ENCODE measurements at regions of chr4 and their contacts with region 1.

Region 1: DNA sequence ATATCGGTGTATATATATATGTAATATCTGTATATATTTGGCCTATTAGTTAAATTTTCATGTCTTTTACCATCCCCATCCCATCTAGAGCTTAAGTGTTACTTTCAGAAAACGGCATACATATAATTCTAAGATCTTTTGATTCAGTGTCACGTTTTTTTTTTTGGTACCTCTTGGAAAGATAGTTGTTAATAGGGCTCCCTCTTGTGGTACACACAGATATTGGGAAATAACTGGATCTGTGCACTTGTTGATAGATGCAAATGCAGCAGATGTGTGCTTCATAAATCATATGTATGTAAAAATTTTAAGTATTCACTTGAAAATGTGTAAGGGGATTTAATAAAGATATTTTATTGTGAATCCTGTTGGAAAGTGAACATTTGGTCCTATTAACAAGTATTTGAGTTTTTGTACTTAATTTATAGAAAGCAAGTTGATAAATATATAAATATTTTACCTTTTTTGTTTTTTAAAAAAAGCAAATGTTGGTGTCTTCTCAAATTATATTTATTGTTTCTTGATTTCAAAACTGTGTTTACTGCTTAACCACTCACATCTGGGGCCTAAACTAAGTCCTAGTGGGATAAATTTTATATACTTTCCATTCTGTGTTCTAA is 74.7 kb downstream of the PAQR3 start:
- DNase-seq: no peak
- ATAC-seq: peak; percentile 81
- H3K4me3 ChIP-seq: no peak overlapping the region
- H3K27ac ChIP-seq: no peak overlapping the region
- H3K4me1 ChIP-seq: no peaks in the 10 kb centered on the region
- H3K27me3 ChIP-seq: no peaks in the 10 kb centered on the region

Region 2: DNA sequence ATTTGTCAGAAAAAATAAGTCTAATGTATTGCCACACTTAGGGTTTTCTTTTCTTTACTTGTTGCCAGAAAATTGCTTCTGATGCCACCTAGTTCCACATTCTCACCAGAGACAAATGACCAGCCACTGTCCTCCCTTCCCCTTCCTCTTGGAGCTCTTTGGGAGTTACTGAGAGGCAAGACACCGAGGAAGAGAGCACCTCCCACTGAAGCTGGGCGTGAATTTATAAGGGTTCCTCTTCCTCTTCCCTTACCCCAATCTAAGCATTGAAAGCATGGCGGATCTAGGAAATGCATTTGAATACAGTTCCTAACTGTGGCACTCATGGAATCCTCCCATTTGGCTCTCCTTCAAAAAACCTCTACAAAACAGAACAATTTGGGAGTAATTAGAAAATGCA is 282.9 kb before region 1 on chr4:
- intact Hi-C with region 1: no loop called
- DNase-seq: peak in 1 of 2 donors; percentile 64
- ATAC-seq: no peak
- H3K4me3 ChIP-seq: no peak overlapping the region
- H3K27ac ChIP-seq: no peak overlapping the region
- H3K4me1 ChIP-seq: no peaks in the 10 kb centered on the region
- H3K27me3 ChIP-seq: no peaks in the 10 kb centered on the region

Region 3: GRCh38 chr4:78612398-78613178 is 251.9 kb before region 1 on chr4:
- intact Hi-C with region 1: loop called (anchors 2 to 5 kb)
- DNase-seq: no peak
- ATAC-seq: peak; percentile 79
- H3K4me3 ChIP-seq: no peak overlapping the region
- H3K27ac ChIP-seq: no peak overlapping the region
- H3K4me1 ChIP-seq: no peaks in the 10 kb centered on the region
- H3K27me3 ChIP-seq: no peaks in the 10 kb centered on the region